Mammary epithelial cell (primary cell): ENCODE measurements at regions of chr17 and their contacts with region 1.

Region 1: GRCh38 chr17:79970576-79971068 is 65.0 kb downstream of the TBC1D16 start:
- DNase-seq: peak; percentile 48
- H3K4me3 ChIP-seq: no peak overlapping the region
- H3K27ac ChIP-seq: peak overlapping the region; percentile 72
- H3K4me1 ChIP-seq: peaks cover 6% of the 10 kb centered on the region
- H3K27me3 ChIP-seq: no peaks in the 10 kb centered on the region
- CTCF ChIP-seq: peak; percentile 34 to 41

Region 2: DNA sequence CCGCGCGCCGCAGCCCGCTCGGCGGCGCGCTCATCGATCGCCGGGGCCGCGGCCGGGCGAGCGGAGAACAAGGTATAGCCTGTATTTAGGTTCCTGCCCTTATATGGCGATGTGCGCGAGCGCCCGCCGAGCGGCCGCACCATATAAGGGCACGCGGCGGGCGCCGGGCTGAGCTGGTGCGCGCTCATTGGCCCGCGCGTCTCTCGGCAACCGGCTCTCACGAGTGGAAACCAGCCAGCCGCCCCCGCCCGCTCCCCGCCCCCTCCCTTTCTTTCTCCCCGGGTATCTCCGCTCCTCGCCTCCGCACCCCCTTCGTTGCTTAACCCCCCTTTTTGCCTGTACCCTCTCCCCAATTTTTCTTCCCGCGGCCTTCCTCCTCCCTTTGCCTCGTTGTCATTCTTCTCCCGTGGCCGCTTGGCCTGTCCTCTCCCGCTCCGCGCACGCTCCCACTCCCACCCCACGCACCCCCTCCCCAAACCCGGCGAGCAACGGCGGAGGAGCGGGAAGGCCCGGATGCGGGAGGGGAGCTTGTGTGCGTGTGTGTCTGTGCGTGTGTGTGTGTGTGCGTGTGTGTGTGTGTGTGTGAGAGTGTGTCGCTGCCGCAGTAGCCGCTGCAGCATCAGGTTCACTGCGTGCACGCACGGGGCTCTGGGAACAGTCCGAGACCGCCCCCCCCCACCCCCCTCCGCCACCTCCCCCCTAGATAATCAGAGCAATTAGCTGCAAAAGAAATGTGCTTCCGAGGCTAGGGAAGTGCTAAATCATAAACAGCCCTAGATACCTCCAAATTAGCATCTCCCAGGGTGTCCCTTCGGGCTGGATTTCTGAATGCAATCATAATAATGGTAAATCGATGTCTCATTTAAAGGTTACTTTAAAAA is 160.3 kb before region 1 on chr17:
- CTCF ChIA-PET with region 1: no interaction called
- dilution Hi-C with region 1: loop called (anchors 5 kb)
- in situ Hi-C with region 1: loop called (anchors 25 kb)
- intact Hi-C with region 1: no loop called
- DNase-seq: peak; percentile 80
- H3K4me3 ChIP-seq: peak overlapping the region in 2 of 3 experiments; percentile 9 to 42
- H3K27ac ChIP-seq: no peak overlapping the region
- H3K4me1 ChIP-seq: peaks cover 40% of the 10 kb centered on the region
- H3K27me3 ChIP-seq: peaks cover 25% of the 10 kb centered on the region
- CTCF ChIP-seq: no peak

Region 3: GRCh38 chr17:79861413-79862216 is 109.0 kb before region 1 on chr17:
- CTCF ChIA-PET with region 1: no interaction called
- dilution Hi-C with region 1: no loop called
- in situ Hi-C with region 1: no loop called
- intact Hi-C with region 1: no loop called
- DNase-seq: no peak
- H3K4me3 ChIP-seq: no peak overlapping the region
- H3K27ac ChIP-seq: no peak overlapping the region
- H3K4me1 ChIP-seq: no peaks in the 10 kb centered on the region
- H3K27me3 ChIP-seq: no peaks in the 10 kb centered on the region
- CTCF ChIP-seq: no peak

Region 4: DNA sequence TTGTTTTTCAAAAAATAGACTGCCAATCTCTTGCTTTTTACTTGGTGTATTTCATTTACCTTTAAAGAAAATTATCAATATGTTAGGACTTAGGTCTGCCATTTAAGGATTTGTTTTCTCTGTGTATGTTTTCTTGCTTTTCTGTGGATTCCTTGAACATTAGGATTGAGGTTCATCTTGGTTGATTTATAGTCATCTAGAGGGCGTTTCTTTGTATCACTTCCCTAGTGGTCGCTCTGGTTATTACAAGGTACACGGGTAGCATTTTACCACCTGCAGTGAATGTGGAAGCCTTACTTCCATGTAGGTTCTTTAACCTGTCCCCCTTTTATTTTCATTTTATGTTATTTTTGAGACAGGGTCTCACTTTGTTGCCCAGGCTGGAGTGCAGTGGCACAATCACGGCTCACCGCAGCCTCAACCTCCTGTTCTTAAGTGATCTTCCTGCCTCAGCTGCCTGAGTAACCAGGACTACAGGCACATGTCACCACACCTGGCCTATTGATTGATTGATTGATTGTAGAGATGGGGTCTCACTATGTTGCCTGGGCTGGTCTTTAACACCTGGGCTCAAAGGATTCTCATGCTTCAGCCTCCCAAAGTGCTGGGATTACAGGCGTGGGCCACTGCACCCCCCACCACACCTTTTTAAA is 96.2 kb before region 1 on chr17:
- CTCF ChIA-PET with region 1: no interaction called
- dilution Hi-C with region 1: loop called (anchors 10 kb)
- in situ Hi-C with region 1: no loop called
- intact Hi-C with region 1: no loop called
- DNase-seq: peak; percentile 26
- H3K4me3 ChIP-seq: no peak overlapping the region
- H3K27ac ChIP-seq: no peak overlapping the region
- H3K4me1 ChIP-seq: no peaks in the 10 kb centered on the region
- H3K27me3 ChIP-seq: no peaks in the 10 kb centered on the region
- CTCF ChIP-seq: peak; percentile 50 to 51

Region 5: DNA sequence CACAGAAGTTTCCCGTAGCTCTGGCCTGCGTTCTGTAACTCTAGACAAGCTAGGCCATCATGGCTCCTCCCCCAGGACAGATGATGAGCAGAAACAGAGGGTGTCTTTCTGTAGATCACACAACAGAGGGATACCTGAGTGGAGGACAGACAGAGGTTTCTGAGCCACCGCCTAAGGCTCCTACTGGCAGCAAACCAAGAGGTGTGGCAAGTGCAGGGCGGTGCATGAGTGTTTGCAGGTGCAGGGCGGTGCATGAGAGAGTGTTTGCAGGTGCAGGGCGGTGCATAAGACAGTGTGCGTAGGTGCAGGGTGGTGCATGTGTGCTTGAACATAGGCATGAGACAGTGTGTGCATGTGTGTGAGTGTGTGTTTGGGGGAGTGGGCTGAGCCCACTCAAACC is 78.2 kb before region 1 on chr17:
- CTCF ChIA-PET with region 1: no interaction called
- dilution Hi-C with region 1: loop called (anchors 5 kb)
- in situ Hi-C with region 1: no loop called
- intact Hi-C with region 1: no loop called
- DNase-seq: peak; percentile 20
- H3K4me3 ChIP-seq: no peak overlapping the region
- H3K27ac ChIP-seq: no peak overlapping the region
- H3K4me1 ChIP-seq: no peaks in the 10 kb centered on the region
- H3K27me3 ChIP-seq: no peaks in the 10 kb centered on the region
- CTCF ChIP-seq: no peak

Region 6: GRCh38 chr17:79937391-79938335 is 33.0 kb before region 1 on chr17:
- CTCF ChIA-PET with region 1: no interaction called
- dilution Hi-C with region 1: loop called (anchors 5 kb)
- in situ Hi-C with region 1: no loop called
- intact Hi-C with region 1: no loop called
- DNase-seq: no peak
- H3K4me3 ChIP-seq: no peak overlapping the region
- H3K27ac ChIP-seq: no peak overlapping the region
- H3K4me1 ChIP-seq: peaks cover 3% of the 10 kb centered on the region
- H3K27me3 ChIP-seq: no peaks in the 10 kb centered on the region
- CTCF ChIP-seq: no peak

Region 7: GRCh38 chr17:80071116-80071980 is 100.7 kb after region 1 on chr17:
- CTCF ChIA-PET with region 1: no interaction called
- dilution Hi-C with region 1: loop called (anchors 5 kb)
- in situ Hi-C with region 1: no loop called
- intact Hi-C with region 1: no loop called
- DNase-seq: no peak
- H3K4me3 ChIP-seq: peak overlapping the region in 1 of 3 experiments; percentile 10
- H3K27ac ChIP-seq: no peak overlapping the region
- H3K4me1 ChIP-seq: peaks cover 7% of the 10 kb centered on the region
- H3K27me3 ChIP-seq: no peaks in the 10 kb centered on the region
- CTCF ChIP-seq: no peak